Naive thymus-derived CD8-positive, alpha-beta T cell (primary cell): ENCODE measurements at regions of chr2 and their contacts with region 1.

Region 1: DNA sequence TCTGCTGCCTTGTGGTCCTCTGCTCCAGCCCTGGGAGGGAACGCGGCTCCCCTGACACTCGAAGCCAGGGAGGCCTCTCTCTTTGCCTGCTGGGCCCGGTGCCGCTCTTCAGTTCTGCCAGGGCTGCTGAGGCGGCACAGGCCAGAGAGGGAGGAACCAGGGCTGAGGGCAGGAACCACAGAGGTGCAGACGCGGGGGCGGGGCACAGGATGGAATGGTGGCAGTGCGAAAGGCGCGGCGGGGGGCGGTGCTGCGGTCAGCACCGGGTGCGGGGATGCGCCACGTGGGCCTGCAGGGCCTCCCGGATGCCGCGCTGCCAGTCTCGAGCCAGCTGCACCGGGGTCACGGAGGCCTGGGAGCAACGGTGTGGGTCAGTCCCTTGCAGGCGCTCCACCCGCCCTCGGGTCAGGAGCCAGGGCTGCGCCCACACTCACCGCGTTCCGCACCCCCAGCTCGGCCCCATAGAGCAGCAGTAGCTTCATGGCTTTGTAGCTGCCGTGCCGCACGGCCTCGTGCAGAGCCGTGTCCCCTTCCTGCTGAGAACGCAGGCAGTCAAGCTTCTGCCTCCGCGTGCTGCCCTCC is 4.4 kb downstream of the ANKRD23 start:
- DNase-seq: peak; percentile 62 to 89 (median 80)
- ATAC-seq: peak; percentile 96 to 98
- H3K4me3 Mint-ChIP-seq: peak overlapping the region; percentile 13 to 81 (median 74)
- H3K27ac Mint-ChIP-seq: peak overlapping the region in 8 of 10 donors; percentile 46 to 92 (median 81)
- H3K4me1 Mint-ChIP-seq: peaks cover 10 to 27% (median 16%) of the 10 kb centered on the region in 4 donors
- H3K27me3 Mint-ChIP-seq: no peaks in the 10 kb centered on the region

Region 2: DNA sequence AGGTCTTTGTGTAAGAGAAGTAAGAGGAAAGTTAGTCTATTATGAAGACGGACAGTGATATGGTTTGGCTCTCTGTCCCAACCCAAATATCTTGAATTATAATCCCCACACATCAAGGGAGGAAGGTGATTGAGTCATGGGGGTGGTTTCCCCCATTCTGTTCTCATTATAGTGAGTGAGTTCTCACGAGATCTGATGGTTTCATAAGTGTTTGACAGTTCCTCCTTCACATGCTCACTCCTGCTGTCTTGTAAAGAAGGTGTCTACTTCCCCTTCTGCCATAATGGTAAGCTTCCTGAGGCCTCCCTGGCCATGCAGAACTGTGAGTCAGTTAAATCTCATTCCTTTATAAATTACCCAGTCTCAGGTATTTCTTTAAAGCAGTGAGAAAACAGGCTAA is 401.9 kb before region 1 on chr2:
- POLR2A ChIA-PET with region 1: no interaction called
- DNase-seq: no peak
- ATAC-seq: no peak
- H3K4me3 Mint-ChIP-seq: no peak overlapping the region
- H3K27ac Mint-ChIP-seq: no peak overlapping the region
- H3K4me1 Mint-ChIP-seq: no peaks in the 10 kb centered on the region
- H3K27me3 Mint-ChIP-seq: peaks cover 0 to 11% (median 0%) of the 10 kb centered on the region in 5 donors

Region 3: DNA sequence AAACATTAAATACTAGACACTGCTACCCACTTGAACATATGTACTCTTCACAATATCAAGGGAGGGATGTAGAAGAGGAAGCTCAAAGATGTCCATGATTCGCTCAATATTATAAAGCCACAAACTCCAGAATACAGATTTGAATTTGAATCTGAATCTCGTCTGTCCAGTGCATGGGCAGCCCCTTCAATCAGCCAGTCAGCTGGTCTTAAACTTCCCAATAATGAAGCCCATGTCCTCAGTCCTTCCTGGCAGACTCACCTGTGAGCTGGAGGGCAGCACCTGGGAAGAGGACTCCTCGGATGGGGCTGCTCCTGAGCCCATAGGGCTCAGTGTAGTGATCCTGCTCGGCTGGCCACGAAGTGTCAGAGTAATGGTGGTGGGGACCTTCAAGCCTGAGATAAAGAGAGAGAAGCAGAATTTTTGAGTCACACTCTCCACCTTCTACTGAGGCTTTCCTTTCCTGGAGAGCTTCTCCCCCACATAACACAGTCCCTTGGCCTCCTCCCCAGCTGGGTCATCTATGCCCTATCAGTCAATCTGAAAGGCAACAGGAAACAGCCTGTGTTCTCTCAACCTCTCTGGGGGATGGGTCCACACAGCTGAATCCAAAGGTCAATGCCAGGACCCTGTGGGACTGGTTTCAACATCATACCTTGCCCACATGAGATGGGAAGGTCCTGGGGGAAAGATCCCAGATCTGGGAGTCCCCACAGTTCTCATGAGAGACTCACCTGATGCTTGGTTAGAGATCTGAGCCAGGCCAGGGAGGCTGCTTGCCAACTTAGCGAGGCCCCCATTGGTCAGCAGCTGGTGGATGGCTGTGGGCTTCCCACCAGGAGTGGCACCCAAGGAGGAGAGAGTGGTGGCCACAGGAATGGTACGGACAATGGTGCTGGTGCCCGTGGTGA is 237.7 kb before region 1 on chr2:
- POLR2A ChIA-PET with region 1: no interaction called
- DNase-seq: no peak
- ATAC-seq: no peak
- H3K4me3 Mint-ChIP-seq: no peak overlapping the region
- H3K27ac Mint-ChIP-seq: peak overlapping the region in 5 of 10 donors; percentile 34 to 86 (median 37)
- H3K4me1 Mint-ChIP-seq: peaks cover 0 to 7% (median 5%) of the 10 kb centered on the region in 4 donors
- H3K27me3 Mint-ChIP-seq: no peaks in the 10 kb centered on the region

Region 4: DNA sequence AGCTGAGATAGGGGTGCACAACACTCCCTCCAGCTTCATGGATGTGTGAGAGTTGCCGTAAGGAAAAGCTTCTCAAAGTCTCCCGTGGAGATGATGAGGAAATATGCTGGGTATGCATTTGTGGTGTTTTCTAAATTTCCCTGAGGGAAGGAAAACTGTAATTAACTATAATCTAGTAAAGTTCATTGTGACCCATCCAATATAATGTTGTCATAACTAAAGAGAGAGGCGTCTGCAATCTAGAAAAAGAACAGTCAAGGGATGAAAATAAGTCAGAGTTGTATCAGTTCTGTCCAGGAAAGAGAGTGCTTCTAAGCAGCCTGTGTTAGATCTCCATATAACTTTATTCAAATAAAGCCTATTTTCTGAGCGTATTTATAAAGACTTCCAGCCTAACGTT is 92.2 kb before region 1 on chr2:
- POLR2A ChIA-PET with region 1: no interaction called
- DNase-seq: no peak
- ATAC-seq: no peak
- H3K4me3 Mint-ChIP-seq: no peak overlapping the region
- H3K27ac Mint-ChIP-seq: peak overlapping the region in 1 of 10 donors; percentile 45
- H3K4me1 Mint-ChIP-seq: peaks cover 0 to 2% (median 0%) of the 10 kb centered on the region in 4 donors
- H3K27me3 Mint-ChIP-seq: peaks cover 0 to 5% (median 0%) of the 10 kb centered on the region in 5 donors

Region 5: GRCh38 chr2:96816128-96816835 is 23.1 kb before region 1 on chr2 and contains the start of gene CNNM3:
- POLR2A ChIA-PET with region 1: interaction called, 32 read pairs
- DNase-seq: peak; percentile 88 to 96 (median 94)
- ATAC-seq: peak; percentile 90 to 93
- H3K4me3 Mint-ChIP-seq: peak within 1 kb of the TSS; percentile 84 to 98 (median 89)
- H3K27ac Mint-ChIP-seq: peak within 1 kb of the TSS in 9 of 10 donors; percentile 78 to 94 (median 85)
- H3K4me1 Mint-ChIP-seq: peaks cover 36 to 58% (median 56%) of the 10 kb centered on the region in 4 donors
- H3K27me3 Mint-ChIP-seq: no peaks in the 10 kb centered on the region
- polyA plus RNA-seq, gene CNNM3: 2.8 to 12.0 (median 11.4) TPM

Region 6: GRCh38 chr2:96891491-96892333 is 52.3 kb after region 1 on chr2:
- POLR2A ChIA-PET with region 1: no interaction called
- DNase-seq: peak in 1 of 10 donors; percentile 47
- ATAC-seq: peak; percentile 74 to 82
- H3K4me3 Mint-ChIP-seq: peak overlapping the region in 9 of 10 donors; percentile 1 to 72 (median 42)
- H3K27ac Mint-ChIP-seq: peak overlapping the region; percentile 4 to 80 (median 54)
- H3K4me1 Mint-ChIP-seq: peaks cover 35 to 62% (median 58%) of the 10 kb centered on the region in 4 donors
- H3K27me3 Mint-ChIP-seq: no peaks in the 10 kb centered on the region